CD14-positive monocyte (primary cell): ENCODE measurements at regions of chr16 and their contacts with region 1.

Region 1: DNA sequence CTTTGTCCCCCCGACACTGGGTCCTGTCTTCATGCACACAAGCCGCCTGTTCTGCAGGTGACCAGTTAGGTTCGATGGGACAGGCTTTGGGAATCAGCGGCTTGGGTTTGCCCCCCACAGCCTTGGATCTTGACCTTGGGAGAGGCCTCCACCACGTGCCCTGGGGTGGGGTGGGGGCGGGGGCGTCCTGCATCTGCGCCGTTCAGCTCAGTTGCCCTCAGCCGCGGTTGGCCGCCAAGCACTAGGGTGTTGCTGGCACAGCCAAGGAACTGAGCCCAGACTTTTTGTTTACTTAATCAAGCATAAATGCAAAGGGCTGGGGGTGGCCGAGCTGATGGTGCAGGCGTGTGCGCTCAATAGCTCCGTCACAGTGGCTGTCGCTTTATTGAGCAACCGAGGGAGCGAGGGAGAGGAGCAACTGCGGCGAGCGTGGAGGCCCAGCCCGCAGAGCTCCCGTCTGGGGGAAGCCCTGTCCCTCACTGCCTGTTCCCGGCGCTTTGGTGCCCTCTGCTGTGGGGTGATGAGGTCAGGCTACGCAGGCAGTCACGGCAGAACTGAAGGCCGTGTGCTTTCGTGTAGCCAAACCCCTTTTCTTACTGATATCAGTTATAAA is 33.9 kb downstream of the JPH3 start:
- DNase-seq: peak; percentile 59 to 80 (median 75)
- H3K4me3 ChIP-seq: no peak overlapping the region
- H3K4me3 Mint-ChIP-seq: peak overlapping the region; percentile 58 to 86
- H3K27ac ChIP-seq: no peak overlapping the region
- H3K27ac Mint-ChIP-seq: peak overlapping the region in 2 of 7 donors; percentile 10 to 19
- H3K4me1 ChIP-seq: peaks cover 5 to 11% of the 10 kb centered on the region in 2 donors
- H3K4me1 Mint-ChIP-seq: peaks cover 12% of the 10 kb centered on the region
- H3K27me3 ChIP-seq: peaks cover 0 to 3% of the 10 kb centered on the region in 2 donors
- H3K27me3 Mint-ChIP-seq: peaks cover 20 to 31% (median 25%) of the 10 kb centered on the region in 3 donors
- CTCF ChIP-seq: peak; percentile 57

Region 2: DNA sequence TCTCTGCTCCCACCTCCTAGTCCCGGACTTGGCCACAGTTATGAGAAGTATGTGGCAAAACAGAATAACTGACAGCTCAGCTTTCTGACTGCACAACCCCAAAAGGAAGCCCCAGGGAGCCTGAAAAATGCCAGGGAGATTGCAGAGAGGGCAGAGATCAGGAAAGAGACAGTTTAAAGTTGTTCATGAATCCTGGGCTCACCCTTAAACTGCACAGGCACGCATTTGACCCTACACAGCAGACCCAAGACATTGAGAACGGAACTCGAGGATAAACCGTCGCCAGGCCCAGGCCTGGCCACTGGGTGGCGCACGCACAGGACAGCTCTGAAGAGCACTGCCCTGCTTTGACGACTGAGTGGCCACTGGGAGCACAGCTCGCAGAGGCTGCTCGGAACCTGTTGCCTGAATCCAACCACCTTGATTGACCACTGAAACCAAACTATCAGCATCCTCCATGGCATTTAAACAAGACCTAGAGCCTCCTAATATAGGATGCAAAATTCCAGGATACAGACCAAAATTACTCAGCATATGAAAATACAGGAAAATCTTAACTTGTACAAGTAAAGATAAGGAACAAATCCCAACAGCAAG is 433.0 kb before region 1 on chr16:
- intact Hi-C with region 1: loop called in 1 of 2 experiments (anchors 10 kb)
- DNase-seq: peak; percentile 10 to 23 (median 17)
- H3K4me3 ChIP-seq: no peak overlapping the region
- H3K4me3 Mint-ChIP-seq: no peak overlapping the region
- H3K27ac ChIP-seq: no peak overlapping the region
- H3K27ac Mint-ChIP-seq: no peak overlapping the region
- H3K4me1 ChIP-seq: no peaks in the 10 kb centered on the region
- H3K4me1 Mint-ChIP-seq: no peaks in the 10 kb centered on the region
- H3K27me3 ChIP-seq: no peaks in the 10 kb centered on the region
- H3K27me3 Mint-ChIP-seq: peaks cover 3 to 7% (median 6%) of the 10 kb centered on the region in 3 donors
- CTCF ChIP-seq: peak; percentile 71

Region 3: DNA sequence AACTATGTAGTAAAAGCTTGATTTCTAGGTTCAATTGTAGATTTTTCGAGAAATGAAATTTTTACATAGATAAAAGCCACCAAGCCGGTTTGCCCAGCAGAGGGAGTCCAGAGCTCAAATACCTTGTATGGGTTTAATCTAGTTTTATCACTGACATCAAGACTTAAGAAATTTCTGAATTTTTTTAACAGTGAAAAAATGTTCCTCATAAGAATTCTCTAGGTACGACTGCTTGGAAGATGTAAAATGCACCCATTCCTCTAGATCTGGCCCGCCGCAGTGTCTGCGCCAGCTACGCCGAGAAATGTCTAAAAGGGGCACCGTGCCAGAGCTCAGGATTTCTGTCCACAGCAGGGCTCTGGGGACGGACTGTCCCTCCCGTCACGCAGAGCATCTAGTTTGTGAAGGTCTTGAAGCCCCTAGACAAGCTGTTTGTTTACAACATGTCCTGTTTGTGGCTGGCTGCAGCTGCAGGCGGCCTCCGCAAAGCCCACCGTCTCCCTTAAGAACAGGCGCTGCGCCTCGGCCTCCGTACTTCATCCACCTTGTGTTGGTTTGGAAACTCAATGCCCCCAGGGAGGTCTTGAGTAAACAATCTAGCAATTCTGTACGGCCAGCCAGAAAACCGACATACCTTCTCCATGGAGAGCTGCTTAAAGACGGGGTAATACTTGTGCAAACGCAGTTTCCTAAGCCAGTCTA is 219.2 kb before region 1 on chr16:
- intact Hi-C with region 1: loop called in 1 of 2 experiments (anchors 5 kb)
- DNase-seq: no peak
- H3K4me3 ChIP-seq: no peak overlapping the region
- H3K4me3 Mint-ChIP-seq: no peak overlapping the region
- H3K27ac ChIP-seq: no peak overlapping the region
- H3K27ac Mint-ChIP-seq: peak overlapping the region in 1 of 7 donors; percentile 7
- H3K4me1 ChIP-seq: no peaks in the 10 kb centered on the region
- H3K4me1 Mint-ChIP-seq: no peaks in the 10 kb centered on the region
- H3K27me3 ChIP-seq: no peaks in the 10 kb centered on the region
- H3K27me3 Mint-ChIP-seq: peaks cover 0 to 3% (median 2%) of the 10 kb centered on the region in 3 donors
- CTCF ChIP-seq: peak; percentile 62

Region 4: DNA sequence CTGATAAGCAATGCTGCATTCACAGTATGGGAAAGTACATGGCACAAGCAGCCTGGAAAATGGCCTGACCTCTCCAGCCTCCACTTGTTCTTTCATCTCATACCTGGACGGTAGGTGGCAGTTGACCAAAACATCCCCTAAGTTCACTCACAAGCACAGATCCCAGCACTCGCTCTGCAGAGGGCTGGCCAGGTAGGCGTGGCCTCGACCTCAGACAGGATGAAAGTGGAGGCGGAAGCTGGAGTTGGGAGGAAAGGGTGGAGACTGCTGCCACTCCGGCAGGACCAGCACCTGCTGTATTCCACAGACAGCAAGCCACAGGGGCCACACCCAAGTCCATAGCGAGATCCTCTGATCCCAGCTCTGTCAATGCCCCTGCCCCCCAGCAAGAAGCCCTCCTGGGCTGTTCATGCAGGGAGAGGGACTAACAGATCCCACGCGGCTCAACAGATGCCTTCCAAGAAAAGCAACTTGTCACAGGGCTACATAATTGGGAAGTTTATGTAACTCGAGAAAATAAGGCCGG is 174.6 kb before region 1 on chr16:
- intact Hi-C with region 1: no loop called
- DNase-seq: peak in 1 of 3 donors; percentile 7
- H3K4me3 ChIP-seq: no peak overlapping the region
- H3K4me3 Mint-ChIP-seq: no peak overlapping the region
- H3K27ac ChIP-seq: no peak overlapping the region
- H3K27ac Mint-ChIP-seq: peak overlapping the region in 1 of 7 donors; percentile 37
- H3K4me1 ChIP-seq: peaks cover 27 to 28% of the 10 kb centered on the region in 2 donors
- H3K4me1 Mint-ChIP-seq: peaks cover 33% of the 10 kb centered on the region
- H3K27me3 ChIP-seq: no peaks in the 10 kb centered on the region
- H3K27me3 Mint-ChIP-seq: peaks cover 0 to 7% (median 6%) of the 10 kb centered on the region in 3 donors
- CTCF ChIP-seq: no peak

Region 5: GRCh38 chr16:87550496-87550961 is 85.6 kb before region 1 on chr16:
- intact Hi-C with region 1: loop called (anchors 1 to 2 kb)
- DNase-seq: peak; percentile 12 to 56 (median 38)
- H3K4me3 ChIP-seq: no peak overlapping the region
- H3K4me3 Mint-ChIP-seq: no peak overlapping the region
- H3K27ac ChIP-seq: no peak overlapping the region
- H3K27ac Mint-ChIP-seq: no peak overlapping the region
- H3K4me1 ChIP-seq: peaks cover 20 to 21% of the 10 kb centered on the region in 2 donors
- H3K4me1 Mint-ChIP-seq: peaks cover 30% of the 10 kb centered on the region
- H3K27me3 ChIP-seq: no peaks in the 10 kb centered on the region
- H3K27me3 Mint-ChIP-seq: peaks cover 1 to 18% (median 6%) of the 10 kb centered on the region in 3 donors
- CTCF ChIP-seq: peak; percentile 99